ENCODE measurements at regions of chr4 and their contacts with region 1.

Region 1: GRCh38 chr4:123588631-123589241 is 192.1 kb downstream of the SPRY1 start:
- DNase-seq: peak; percentile 84
- ATAC-seq: peak; percentile 95
- H3K4me3 ChIP-seq: peak overlapping the region; percentile 4; the same call in 1 of the 2 replicates
- H3K27ac ChIP-seq: no peak overlapping the region
- H3K4me1 ChIP-seq: peaks cover 9% of the 10 kb centered on the region
- H3K27me3 ChIP-seq: no peaks in the 10 kb centered on the region
- CTCF ChIP-seq: no peak
- EP300 ChIP-seq: peak; percentile 85 to 86
- POLR2A ChIP-seq: no peak
- RAD21 ChIP-seq: 0 out of 2 replicates have a peak, but pooled peaks have one; percentile 0

Region 2: DNA sequence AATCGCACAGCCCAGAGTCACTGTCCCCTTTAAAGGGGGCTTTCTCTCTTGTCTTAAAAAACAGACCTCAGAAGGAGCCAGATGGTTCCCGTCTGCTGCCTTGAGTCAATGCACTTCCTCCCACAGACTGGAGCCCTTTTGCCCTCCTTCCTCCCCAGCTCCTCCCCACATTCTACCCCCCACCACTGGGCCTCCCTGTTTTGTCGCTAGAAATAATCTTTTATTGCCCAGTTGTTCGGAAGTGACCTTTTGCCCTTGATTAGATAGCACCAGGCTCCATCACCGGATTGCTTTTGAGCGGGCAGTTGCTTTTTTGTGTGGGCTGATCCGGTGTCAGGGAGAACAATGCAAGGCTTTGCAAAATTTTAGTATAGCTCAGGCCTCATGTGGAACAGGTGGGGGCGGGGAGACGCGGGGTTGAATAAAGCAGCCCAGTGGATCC is 144.4 kb before region 1 on chr4:
- CTCF ChIA-PET with region 1: no interaction called
- POLR2A ChIA-PET with region 1: no interaction called
- RAD21 ChIA-PET with region 1: interaction called, 6 read pairs
- SMC1A ChIA-PET with region 1: interaction called, 5 read pairs
- in situ Hi-C with region 1: no loop called
- intact Hi-C with region 1: loop called (anchors 5 kb)
- DNase-seq: peak; percentile 45
- ATAC-seq: peak; percentile 93
- H3K4me3 ChIP-seq: peak overlapping the region; percentile 29; the same call in 1 of the 2 replicates
- H3K27ac ChIP-seq: peak overlapping the region; percentile 43; the same call in 1 of the 2 replicates
- H3K4me1 ChIP-seq: peaks cover 7% of the 10 kb centered on the region
- H3K27me3 ChIP-seq: no peaks in the 10 kb centered on the region
- CTCF ChIP-seq: no peak
- EP300 ChIP-seq: no peak
- POLR2A ChIP-seq: no peak
- RAD21 ChIP-seq: no peak

Region 3: GRCh38 chr4:123599920-123600810 is 11.4 kb after region 1 on chr4:
- CTCF ChIA-PET with region 1: no interaction called
- POLR2A ChIA-PET with region 1: no interaction called
- RAD21 ChIA-PET with region 1: interaction called, 3 read pairs
- SMC1A ChIA-PET with region 1: interaction called, 30 read pairs
- in situ Hi-C with region 1: no loop called
- intact Hi-C with region 1: no loop called
- DNase-seq: peak; percentile 85
- ATAC-seq: peak; percentile 98
- H3K4me3 ChIP-seq: no peak overlapping the region
- H3K27ac ChIP-seq: no peak overlapping the region
- H3K4me1 ChIP-seq: peaks cover 7% of the 10 kb centered on the region; the same call in 1 of the 2 replicates
- H3K27me3 ChIP-seq: no peaks in the 10 kb centered on the region
- CTCF ChIP-seq: no peak
- EP300 ChIP-seq: peak; percentile 77 to 83; a peak in 3 of 4 replicates
- POLR2A ChIP-seq: no peak
- RAD21 ChIP-seq: 0 out of 2 replicates have a peak, but pooled peaks have one; percentile 11

Region 4: DNA sequence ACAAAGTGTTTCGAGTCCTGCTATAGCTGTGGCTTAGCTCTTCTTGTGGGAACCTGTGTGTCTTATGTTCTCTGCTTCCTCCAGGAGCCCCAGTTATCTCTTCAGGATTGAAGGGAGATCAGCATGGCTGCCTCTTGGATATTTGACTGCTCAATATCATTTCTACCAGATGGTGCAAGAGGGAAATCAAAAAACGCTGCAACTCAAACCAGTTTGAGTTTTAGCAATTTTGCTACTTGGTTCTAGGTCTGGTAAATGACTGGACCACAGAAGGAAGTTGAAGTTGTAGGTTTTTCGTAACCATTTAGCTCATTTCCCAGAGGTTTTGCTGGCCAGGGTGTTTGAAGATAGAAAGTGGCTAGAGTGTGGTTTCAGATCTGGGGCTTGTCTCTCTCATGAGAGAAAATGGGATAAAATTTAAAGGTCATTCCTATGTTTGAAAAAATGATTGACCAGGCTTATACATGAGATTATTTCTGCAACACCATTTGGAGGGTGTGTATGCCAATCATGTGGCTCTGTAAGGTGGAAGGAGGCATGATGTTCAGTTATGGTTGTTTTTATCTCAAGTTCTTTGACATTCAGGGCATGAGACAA is 18.3 kb after region 1 on chr4:
- CTCF ChIA-PET with region 1: interaction called, 3 read pairs
- POLR2A ChIA-PET with region 1: interaction called, 3 read pairs
- RAD21 ChIA-PET with region 1: interaction called, 7 read pairs
- SMC1A ChIA-PET with region 1: interaction called, 30 read pairs
- in situ Hi-C with region 1: no loop called
- intact Hi-C with region 1: loop called (anchors 2 kb)
- DNase-seq: peak; percentile 34
- ATAC-seq: peak; percentile 84
- H3K4me3 ChIP-seq: no peak overlapping the region
- H3K27ac ChIP-seq: no peak overlapping the region
- H3K4me1 ChIP-seq: no peaks in the 10 kb centered on the region
- H3K27me3 ChIP-seq: no peaks in the 10 kb centered on the region
- CTCF ChIP-seq: no peak
- EP300 ChIP-seq: no peak
- POLR2A ChIP-seq: no peak
- RAD21 ChIP-seq: no peak

Region 5: DNA sequence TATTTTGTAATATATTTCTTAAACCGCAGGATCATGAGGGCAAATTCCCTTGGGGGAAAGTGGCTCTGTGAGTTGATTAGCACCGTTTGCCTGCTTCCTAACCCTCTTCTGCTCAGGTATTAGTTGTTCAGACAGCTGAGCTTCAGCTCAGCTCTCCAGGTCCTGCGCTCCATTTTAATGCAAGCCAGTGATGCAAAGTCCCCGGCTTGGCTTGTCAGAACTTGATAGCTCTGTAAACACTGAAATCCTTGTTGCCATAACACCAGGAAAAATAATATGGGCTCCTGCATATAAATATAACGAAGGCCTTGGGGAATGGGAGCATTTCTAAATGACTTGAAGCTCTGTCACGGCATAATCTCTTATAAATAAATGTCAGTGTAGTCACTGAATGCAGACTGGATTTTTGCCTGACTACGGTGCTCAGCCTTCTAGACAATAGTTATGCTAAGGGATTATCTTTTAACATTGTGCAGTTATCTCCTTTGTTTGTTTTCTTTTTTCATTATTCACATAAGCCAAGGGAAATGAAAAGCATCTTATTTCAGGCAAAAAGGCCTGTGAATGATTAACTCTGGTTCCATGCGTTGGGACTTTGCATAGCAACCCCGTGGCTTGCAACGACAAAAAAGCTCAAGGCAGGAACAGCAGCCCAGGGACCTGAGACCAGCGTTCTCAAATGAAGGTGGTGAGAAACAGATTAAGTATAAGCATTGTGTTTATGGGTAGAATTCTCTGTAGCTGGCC is 61.1 kb after region 1 on chr4:
- CTCF ChIA-PET with region 1: interaction called, 14 read pairs
- POLR2A ChIA-PET with region 1: interaction called, 4 read pairs
- RAD21 ChIA-PET with region 1: interaction called, 31 read pairs
- SMC1A ChIA-PET with region 1: interaction called, 44 read pairs
- in situ Hi-C with region 1: no loop called
- intact Hi-C with region 1: loop called (anchors 2 kb)
- DNase-seq: no peak
- ATAC-seq: peak; percentile 72
- H3K4me3 ChIP-seq: no peak overlapping the region
- H3K27ac ChIP-seq: no peak overlapping the region
- H3K4me1 ChIP-seq: no peaks in the 10 kb centered on the region; the same call in 1 of the 2 replicates
- H3K27me3 ChIP-seq: no peaks in the 10 kb centered on the region
- CTCF ChIP-seq: no peak
- EP300 ChIP-seq: no peak
- POLR2A ChIP-seq: no peak
- RAD21 ChIP-seq: no peak

Region 6: DNA sequence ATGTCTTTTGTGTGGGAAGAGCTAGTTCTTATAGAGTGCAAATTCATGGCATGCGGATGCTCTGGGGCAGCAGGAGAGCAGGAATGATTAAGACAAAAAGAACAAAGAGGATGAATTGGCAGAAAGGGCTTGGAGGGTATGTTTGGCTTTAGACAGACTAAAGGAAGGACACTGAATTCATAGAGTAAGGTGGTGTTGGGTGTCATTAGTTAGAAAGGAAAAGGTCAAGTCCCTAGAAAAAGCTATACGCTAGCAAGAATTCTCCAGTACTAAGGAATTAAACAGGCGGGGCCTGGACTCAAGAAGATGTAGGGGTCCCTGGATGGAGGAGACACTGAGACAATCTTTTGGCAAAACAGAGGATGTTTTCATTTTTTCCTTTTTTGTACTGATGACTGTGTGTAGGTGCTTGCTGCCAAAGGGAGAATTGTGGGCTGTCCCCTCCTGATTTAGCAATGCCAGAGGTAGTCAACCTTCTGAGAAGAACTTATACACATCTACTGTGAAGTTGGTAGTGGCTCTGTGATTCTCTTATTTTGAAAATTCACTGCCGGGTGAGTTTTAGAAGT is 198.9 kb after region 1 on chr4:
- CTCF ChIA-PET with region 1: no interaction called
- POLR2A ChIA-PET with region 1: no interaction called
- RAD21 ChIA-PET with region 1: no interaction called
- SMC1A ChIA-PET with region 1: no interaction called
- in situ Hi-C with region 1: no loop called
- intact Hi-C with region 1: no loop called
- DNase-seq: no peak
- ATAC-seq: no peak
- H3K4me3 ChIP-seq: no peak overlapping the region
- H3K27ac ChIP-seq: no peak overlapping the region
- H3K4me1 ChIP-seq: no peaks in the 10 kb centered on the region
- H3K27me3 ChIP-seq: no peaks in the 10 kb centered on the region
- CTCF ChIP-seq: no peak
- EP300 ChIP-seq: no peak
- POLR2A ChIP-seq: no peak
- RAD21 ChIP-seq: no peak

Measured in GM12878 (cell line).